Activated B cell treated with CpG ODN at 0.5 μM for 24 hours (primary cell): ENCODE measurements at regions of chr1 and their contacts with region 1.

Region 1: GRCh38 chr1:10430216-10431069 is at the start of gene CENPS:
- DNase-seq: peak; percentile 91
- ATAC-seq: peak; percentile 86
- H3K4me3 Mint-ChIP-seq: peak within 1 kb of the TSS; percentile 92
- H3K27ac Mint-ChIP-seq: peak within 1 kb of the TSS; percentile 96
- H3K4me1 Mint-ChIP-seq: peaks cover 28% of the 10 kb centered on the region
- H3K27me3 Mint-ChIP-seq: no peaks in the 10 kb centered on the region
- CTCF ChIP-seq: peak; percentile 57
- total RNA-seq, gene CENPS: 9.2 and 15.2 TPM in 2 replicates

Region 2: GRCh38 chr1:10046356-10047085 is 383.9 kb before region 1 on chr1:
- CTCF ChIA-PET with region 1: no interaction called
- POLR2A ChIA-PET with region 1: no interaction called
- intact Hi-C with region 1: no loop called
- DNase-seq: no peak
- ATAC-seq: no peak
- H3K4me3 Mint-ChIP-seq: no peak overlapping the region
- H3K27ac Mint-ChIP-seq: no peak overlapping the region
- H3K4me1 Mint-ChIP-seq: peaks cover 19% of the 10 kb centered on the region
- H3K27me3 Mint-ChIP-seq: no peaks in the 10 kb centered on the region
- CTCF ChIP-seq: no peak

Region 3: GRCh38 chr1:10378081-10378841 is 52.2 kb before region 1 on chr1:
- CTCF ChIA-PET with region 1: interaction called, 39 read pairs
- POLR2A ChIA-PET with region 1: no interaction called
- intact Hi-C with region 1: no loop called
- DNase-seq: no peak
- ATAC-seq: no peak
- H3K4me3 Mint-ChIP-seq: no peak overlapping the region
- H3K27ac Mint-ChIP-seq: no peak overlapping the region
- H3K4me1 Mint-ChIP-seq: peaks cover 2% of the 10 kb centered on the region
- H3K27me3 Mint-ChIP-seq: no peaks in the 10 kb centered on the region
- CTCF ChIP-seq: no peak

Region 4: DNA sequence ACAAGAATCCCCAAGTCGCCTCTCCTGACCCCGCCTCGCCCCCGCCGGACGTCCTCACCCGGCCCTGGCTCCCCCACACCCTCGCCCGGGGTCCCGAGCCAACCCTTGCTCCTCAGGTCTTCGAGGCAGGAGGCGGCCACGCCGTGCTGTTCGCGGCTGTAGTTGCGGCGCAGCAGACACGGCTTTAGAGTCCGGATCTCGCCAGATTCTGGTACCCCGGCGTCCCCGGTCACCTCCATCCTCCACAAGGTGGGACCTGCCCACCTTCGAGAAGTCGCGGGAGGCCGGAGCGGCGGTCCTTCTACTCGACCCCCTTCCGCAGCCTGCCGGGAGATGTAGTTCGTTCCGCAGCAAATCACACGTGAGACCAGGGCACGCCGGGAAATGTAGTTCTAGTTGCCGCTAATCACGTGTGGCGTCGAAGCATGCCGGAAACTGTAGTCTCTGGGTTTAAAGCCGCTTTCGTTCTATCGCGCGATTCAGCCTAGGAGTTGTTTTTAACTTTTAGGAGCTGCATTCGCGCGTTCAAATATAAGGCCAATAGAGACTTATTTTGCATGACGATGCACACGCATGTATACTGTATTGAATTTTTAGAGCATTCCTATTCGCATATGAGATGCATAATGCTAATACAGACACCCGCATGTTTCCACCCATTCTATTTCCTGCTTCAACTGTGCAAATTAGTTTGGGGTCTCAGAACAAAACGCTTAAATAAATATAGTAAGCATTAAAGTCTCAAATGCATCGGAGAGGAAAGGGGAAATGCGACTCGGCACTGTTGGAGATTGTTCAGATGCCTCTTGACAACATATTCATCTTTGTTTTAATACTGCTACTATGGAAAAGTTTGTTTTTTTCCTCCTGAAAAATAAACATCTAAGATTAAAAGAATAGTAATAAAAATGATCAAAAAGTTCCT is 42.0 kb after region 1 on chr1 and contains the start of gene DFFA:
- CTCF ChIA-PET with region 1: no interaction called
- POLR2A ChIA-PET with region 1: interaction called, 4 read pairs
- intact Hi-C with region 1: loop called (anchors 1 kb)
- DNase-seq: peak; percentile 82
- ATAC-seq: peak; percentile 78
- H3K4me3 Mint-ChIP-seq: peak within 1 kb of the TSS; percentile 94
- H3K27ac Mint-ChIP-seq: peak within 1 kb of the TSS; percentile 90
- H3K4me1 Mint-ChIP-seq: peaks cover 51% of the 10 kb centered on the region
- H3K27me3 Mint-ChIP-seq: no peaks in the 10 kb centered on the region
- CTCF ChIP-seq: no peak
- total RNA-seq, gene DFFA: 34.3 and 39.0 TPM in 2 replicates

Region 5: GRCh38 chr1:10694633-10695627 is 264.5 kb after region 1 on chr1:
- CTCF ChIA-PET with region 1: no interaction called
- POLR2A ChIA-PET with region 1: no interaction called
- intact Hi-C with region 1: no loop called
- DNase-seq: peak; percentile 79
- ATAC-seq: peak; percentile 76
- H3K4me3 Mint-ChIP-seq: peak overlapping the region; percentile 81
- H3K27ac Mint-ChIP-seq: peak overlapping the region; percentile 74
- H3K4me1 Mint-ChIP-seq: peaks cover 24% of the 10 kb centered on the region
- H3K27me3 Mint-ChIP-seq: peaks cover 5% of the 10 kb centered on the region
- CTCF ChIP-seq: no peak

Region 6: GRCh38 chr1:10867138-10867721 is 436.8 kb after region 1 on chr1:
- CTCF ChIA-PET with region 1: interaction called, 4 read pairs
- POLR2A ChIA-PET with region 1: no interaction called
- intact Hi-C with region 1: loop called (anchors 5 kb)
- DNase-seq: peak; percentile 66
- ATAC-seq: peak; percentile 81
- H3K4me3 Mint-ChIP-seq: no peak overlapping the region
- H3K27ac Mint-ChIP-seq: no peak overlapping the region
- H3K4me1 Mint-ChIP-seq: peaks cover 12% of the 10 kb centered on the region
- H3K27me3 Mint-ChIP-seq: peaks cover 58% of the 10 kb centered on the region
- CTCF ChIP-seq: no peak